CD4-positive, alpha-beta memory T cell (primary cell): ENCODE measurements at regions of chr4 and their contacts with region 1.

Region 1: GRCh38 chr4:88211473-88212252 is 53.2 kb upstream of the ABCG2 start:
- DNase-seq: peak; percentile 43 to 60 (median 58)
- H3K4me3 ChIP-seq: no peak overlapping the region
- H3K4me3 Mint-ChIP-seq: no peak overlapping the region
- H3K27ac ChIP-seq: no peak overlapping the region
- H3K27ac Mint-ChIP-seq: no peak overlapping the region
- H3K4me1 ChIP-seq: no peaks in the 10 kb centered on the region
- H3K4me1 Mint-ChIP-seq: peaks cover 0 to 3% (median 0%) of the 10 kb centered on the region in 4 donors
- H3K27me3 ChIP-seq: no peaks in the 10 kb centered on the region
- H3K27me3 Mint-ChIP-seq: peaks cover 3 to 5% of the 10 kb centered on the region in 2 donors

Region 2: GRCh38 chr4:87679449-87680169 is 532.1 kb before region 1 on chr4:
- CTCF ChIA-PET with region 1: interaction called, 30 read pairs
- POLR2A ChIA-PET with region 1: no interaction called
- intact Hi-C with region 1: no loop called
- DNase-seq: peak in 4 of 5 donors; percentile 0 to 18 (median 3)
- H3K4me3 ChIP-seq: no peak overlapping the region
- H3K4me3 Mint-ChIP-seq: no peak overlapping the region
- H3K27ac ChIP-seq: no peak overlapping the region
- H3K27ac Mint-ChIP-seq: no peak overlapping the region
- H3K4me1 ChIP-seq: no peaks in the 10 kb centered on the region
- H3K4me1 Mint-ChIP-seq: no peaks in the 10 kb centered on the region
- H3K27me3 ChIP-seq: no peaks in the 10 kb centered on the region
- H3K27me3 Mint-ChIP-seq: peaks cover 0 to 3% of the 10 kb centered on the region in 2 donors

Region 3: GRCh38 chr4:87973283-87974169 is 238.1 kb before region 1 on chr4:
- CTCF ChIA-PET with region 1: no interaction called
- POLR2A ChIA-PET with region 1: no interaction called
- intact Hi-C with region 1: loop called (anchors 5 kb)
- DNase-seq: peak in 4 of 5 donors; percentile 9 to 22 (median 16)
- H3K4me3 ChIP-seq: no peak overlapping the region
- H3K4me3 Mint-ChIP-seq: no peak overlapping the region
- H3K27ac ChIP-seq: no peak overlapping the region
- H3K27ac Mint-ChIP-seq: no peak overlapping the region
- H3K4me1 ChIP-seq: peaks cover 7% of the 10 kb centered on the region
- H3K4me1 Mint-ChIP-seq: peaks cover 6 to 11% (median 7%) of the 10 kb centered on the region in 4 donors
- H3K27me3 ChIP-seq: peaks cover 5% of the 10 kb centered on the region
- H3K27me3 Mint-ChIP-seq: peaks cover 20 to 28% of the 10 kb centered on the region in 2 donors

Region 4: DNA sequence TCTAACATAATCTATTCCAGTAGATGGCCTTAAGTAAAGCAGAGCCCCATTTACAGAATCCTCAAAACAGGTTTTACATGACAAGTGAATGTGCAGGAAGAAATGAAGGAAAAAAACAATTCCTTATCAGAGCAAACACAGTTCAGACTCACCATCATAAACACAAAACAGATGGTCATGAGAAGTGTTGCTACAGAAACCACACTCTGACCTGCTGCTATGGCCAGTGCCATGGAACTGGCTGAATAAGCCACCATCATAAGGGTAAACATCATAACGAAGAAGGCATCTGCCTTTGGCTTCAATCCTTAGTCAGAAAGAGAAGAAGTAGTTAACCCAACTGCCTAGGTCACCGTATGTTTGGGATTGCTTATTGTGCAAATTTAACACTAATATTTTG is 114.4 kb before region 1 on chr4:
- CTCF ChIA-PET with region 1: no interaction called
- POLR2A ChIA-PET with region 1: no interaction called
- intact Hi-C with region 1: no loop called
- DNase-seq: no peak
- H3K4me3 ChIP-seq: no peak overlapping the region
- H3K4me3 Mint-ChIP-seq: no peak overlapping the region
- H3K27ac ChIP-seq: no peak overlapping the region
- H3K27ac Mint-ChIP-seq: no peak overlapping the region
- H3K4me1 ChIP-seq: no peaks in the 10 kb centered on the region
- H3K4me1 Mint-ChIP-seq: no peaks in the 10 kb centered on the region
- H3K27me3 ChIP-seq: no peaks in the 10 kb centered on the region
- H3K27me3 Mint-ChIP-seq: peaks cover 0 to 1% of the 10 kb centered on the region in 2 donors

Region 5: DNA sequence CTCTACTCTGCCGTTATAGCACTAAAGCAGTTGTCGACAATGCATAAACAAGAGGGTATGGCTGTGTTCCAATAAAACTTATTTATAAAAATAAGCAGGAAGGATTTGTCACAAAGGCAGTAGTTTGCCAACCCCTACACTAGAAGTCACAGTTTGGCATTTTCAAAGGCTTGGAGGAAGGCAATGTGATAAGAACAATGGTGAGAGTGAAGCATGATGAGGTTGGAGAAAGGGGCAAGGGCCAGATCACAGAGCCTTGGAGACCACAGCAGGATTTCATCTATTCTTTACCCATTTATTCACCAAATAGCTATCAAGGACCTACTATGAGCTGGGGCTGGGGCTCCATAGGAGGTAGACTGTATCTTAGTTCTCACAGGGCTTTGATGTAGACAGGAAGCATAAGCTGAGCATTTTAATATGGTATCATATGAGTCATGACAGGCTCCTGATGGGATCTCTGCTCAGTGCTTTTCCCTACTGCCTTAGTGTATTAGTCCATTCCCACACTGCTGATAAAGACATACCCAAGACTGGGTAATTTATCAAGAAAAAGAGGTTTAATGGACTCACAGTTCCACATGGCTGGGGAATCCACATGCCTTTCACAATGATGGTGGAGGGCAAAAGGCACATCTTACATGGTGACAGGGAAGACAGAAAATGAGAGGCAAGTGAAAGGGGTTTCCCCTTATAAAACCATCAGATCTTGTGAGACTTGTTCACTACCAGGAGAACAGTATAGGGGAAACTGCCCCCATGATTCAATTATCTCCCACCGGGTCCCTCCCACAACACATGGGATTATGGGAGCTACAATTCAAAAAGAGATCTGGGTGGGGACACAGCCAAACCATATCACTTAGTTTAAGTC is 13.8 kb after region 1 on chr4:
- CTCF ChIA-PET with region 1: interaction called, 12 read pairs
- POLR2A ChIA-PET with region 1: no interaction called
- intact Hi-C with region 1: no loop called
- DNase-seq: no peak
- H3K4me3 ChIP-seq: no peak overlapping the region
- H3K4me3 Mint-ChIP-seq: no peak overlapping the region
- H3K27ac ChIP-seq: no peak overlapping the region
- H3K27ac Mint-ChIP-seq: peak overlapping the region in 1 of 7 donors; percentile 80
- H3K4me1 ChIP-seq: peaks cover 2% of the 10 kb centered on the region
- H3K4me1 Mint-ChIP-seq: peaks cover 2 to 3% (median 2%) of the 10 kb centered on the region in 4 donors
- H3K27me3 ChIP-seq: no peaks in the 10 kb centered on the region
- H3K27me3 Mint-ChIP-seq: no peaks in the 10 kb centered on the region

Region 6: GRCh38 chr4:88672987-88673386 is 461.3 kb after region 1 on chr4:
- CTCF ChIA-PET with region 1: no interaction called
- POLR2A ChIA-PET with region 1: no interaction called
- intact Hi-C with region 1: loop called (anchors 10 kb)
- DNase-seq: peak in 3 of 5 donors; percentile 12 to 25 (median 20)
- H3K4me3 ChIP-seq: no peak overlapping the region
- H3K4me3 Mint-ChIP-seq: no peak overlapping the region
- H3K27ac ChIP-seq: no peak overlapping the region
- H3K27ac Mint-ChIP-seq: peak overlapping the region in 3 of 7 donors; percentile 9 to 38 (median 12)
- H3K4me1 ChIP-seq: no peaks in the 10 kb centered on the region
- H3K4me1 Mint-ChIP-seq: peaks cover 0 to 5% (median 4%) of the 10 kb centered on the region in 4 donors
- H3K27me3 ChIP-seq: no peaks in the 10 kb centered on the region
- H3K27me3 Mint-ChIP-seq: no peaks in the 10 kb centered on the region

Region 7: DNA sequence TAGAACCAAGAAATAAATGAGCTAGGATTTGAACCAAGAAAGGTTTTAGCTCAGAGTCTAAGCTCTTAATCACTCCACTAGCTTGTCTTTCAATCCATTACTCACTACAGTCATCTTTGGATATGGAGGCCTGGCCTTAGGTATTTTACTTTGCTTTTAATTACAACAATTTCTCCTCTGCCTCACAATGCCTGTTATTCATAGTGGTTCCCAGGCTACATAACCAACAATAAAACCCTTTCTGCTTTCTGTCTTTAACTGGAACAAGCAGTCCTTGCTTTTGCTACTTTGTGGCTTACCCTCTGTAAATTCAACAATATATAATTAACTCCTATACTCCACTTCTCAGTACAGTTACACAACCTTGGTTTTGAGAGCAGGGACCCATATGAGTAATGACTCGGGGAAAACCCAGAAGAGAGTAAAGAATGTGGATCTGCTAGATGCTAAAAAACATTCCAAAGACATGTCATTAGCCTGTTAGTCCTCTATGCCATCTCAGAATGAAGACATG is 580.7 kb after region 1 on chr4:
- CTCF ChIA-PET with region 1: no interaction called
- POLR2A ChIA-PET with region 1: no interaction called
- intact Hi-C with region 1: no loop called
- DNase-seq: no peak
- H3K4me3 ChIP-seq: no peak overlapping the region
- H3K4me3 Mint-ChIP-seq: no peak overlapping the region
- H3K27ac ChIP-seq: no peak overlapping the region
- H3K27ac Mint-ChIP-seq: peak overlapping the region in 1 of 7 donors; percentile 60
- H3K4me1 ChIP-seq: no peaks in the 10 kb centered on the region
- H3K4me1 Mint-ChIP-seq: peaks cover 0 to 9% (median 8%) of the 10 kb centered on the region in 4 donors
- H3K27me3 ChIP-seq: no peaks in the 10 kb centered on the region
- H3K27me3 Mint-ChIP-seq: no peaks in the 10 kb centered on the region